PC-3 (cell line): ENCODE measurements at regions of chr1 and their contacts with region 1.

Region 1: GRCh38 chr1:173970252-173970651 is 51.9 kb downstream of the RC3H1 start:
- DNase-seq: no peak
- ATAC-seq: no peak
- H3K4me3 ChIP-seq: no peak overlapping the region
- H3K27ac ChIP-seq: no peak overlapping the region
- H3K4me1 ChIP-seq: no peaks in the 10 kb centered on the region
- H3K27me3 ChIP-seq: no peaks in the 10 kb centered on the region
- CTCF ChIP-seq: no peak

Region 2: GRCh38 chr1:174013864-174014418 is 43.7 kb after region 1 on chr1:
- CTCF ChIA-PET with region 1: no interaction called
- POLR2A ChIA-PET with region 1: no interaction called
- intact Hi-C with region 1: no loop called
- DNase-seq: no peak
- ATAC-seq: no peak
- H3K4me3 ChIP-seq: no peak overlapping the region
- H3K27ac ChIP-seq: no peak overlapping the region
- H3K4me1 ChIP-seq: no peaks in the 10 kb centered on the region
- H3K27me3 ChIP-seq: no peaks in the 10 kb centered on the region
- CTCF ChIP-seq: no peak

Region 3: DNA sequence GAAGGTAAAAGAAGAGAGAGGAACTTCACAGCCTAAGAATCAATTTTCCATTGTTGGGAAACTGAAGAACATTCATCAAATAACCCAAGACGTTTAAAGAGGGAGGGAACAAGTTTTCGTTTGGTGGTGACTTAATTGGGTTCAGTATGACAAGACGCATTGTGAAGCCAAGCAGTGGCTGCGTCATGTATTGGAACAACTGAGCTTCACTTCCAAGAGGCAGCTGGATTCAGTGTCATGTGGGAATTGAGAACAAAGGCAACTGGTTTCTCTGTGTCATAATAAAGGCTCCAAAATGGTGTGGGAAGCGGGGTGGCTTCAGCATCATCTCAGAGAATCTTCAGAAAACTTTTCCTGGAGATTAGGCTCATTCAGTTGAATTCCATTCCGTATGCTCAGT is 81.7 kb after region 1 on chr1:
- CTCF ChIA-PET with region 1: interaction called, 17 read pairs
- POLR2A ChIA-PET with region 1: no interaction called
- intact Hi-C with region 1: no loop called
- DNase-seq: no peak
- ATAC-seq: no peak
- H3K4me3 ChIP-seq: no peak overlapping the region
- H3K27ac ChIP-seq: no peak overlapping the region
- H3K4me1 ChIP-seq: no peaks in the 10 kb centered on the region
- H3K27me3 ChIP-seq: no peaks in the 10 kb centered on the region
- CTCF ChIP-seq: no peak